Activated B cell treated with CpG ODN at 0.5 μM for 24 hours (primary cell): ENCODE measurements at regions of chr1 and their contacts with region 1.

Region 1: DNA sequence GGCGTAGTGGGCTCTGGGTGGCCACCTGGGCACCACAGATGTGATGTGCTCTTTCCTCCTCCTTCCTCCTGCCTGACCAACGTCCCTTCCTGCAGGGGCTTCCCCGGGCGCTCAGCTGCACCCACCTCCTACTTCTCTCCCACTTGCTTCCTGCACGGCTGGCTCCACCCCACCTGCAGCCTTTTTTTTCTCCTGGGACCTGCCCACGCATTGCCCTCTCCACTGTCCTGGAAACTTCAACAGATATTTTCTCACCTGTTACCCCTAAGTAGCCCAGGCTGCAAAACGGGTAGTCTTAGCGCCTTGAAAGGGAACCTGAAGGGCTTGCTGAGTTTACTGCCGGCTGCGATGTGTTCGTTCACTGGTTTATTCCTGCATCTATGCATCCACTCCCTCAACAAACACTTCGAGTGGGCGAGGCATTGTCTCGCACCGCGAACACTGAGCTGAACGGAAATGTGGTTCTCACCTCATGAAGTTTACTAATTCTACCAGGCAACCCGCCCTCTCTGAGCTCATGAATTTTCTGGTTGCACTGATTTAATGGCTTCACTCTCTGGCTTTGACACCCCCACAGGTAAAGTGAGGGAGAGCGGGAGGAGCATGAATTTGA is 23.6 kb downstream of the ZBTB18 start:
- DNase-seq: peak; percentile 34
- ATAC-seq: peak; percentile 69
- H3K4me3 Mint-ChIP-seq: peak overlapping the region; percentile 83
- H3K27ac Mint-ChIP-seq: peak overlapping the region; percentile 88
- H3K4me1 Mint-ChIP-seq: peaks cover 50% of the 10 kb centered on the region
- H3K27me3 Mint-ChIP-seq: no peaks in the 10 kb centered on the region
- CTCF ChIP-seq: no peak

Region 2: DNA sequence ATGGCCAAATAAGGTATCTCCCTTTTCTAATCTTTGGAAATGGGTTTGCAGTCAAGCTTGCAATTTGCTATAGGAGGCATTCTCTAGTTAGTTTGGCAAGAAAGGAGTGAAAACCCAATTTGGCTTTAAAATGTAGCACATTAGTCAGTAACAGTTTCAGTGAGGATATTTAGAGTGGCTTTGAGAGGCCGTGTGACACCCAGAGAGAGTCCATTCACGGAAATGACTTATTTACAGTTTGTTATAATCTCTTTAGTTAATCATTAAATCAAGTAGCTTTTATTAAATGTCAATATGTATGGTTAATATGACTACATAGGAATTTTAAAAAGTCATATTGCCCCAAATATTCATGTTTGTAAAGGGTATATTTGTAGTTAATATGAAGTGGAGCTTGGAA is 14.0 kb before region 1 on chr1:
- CTCF ChIA-PET with region 1: no interaction called
- POLR2A ChIA-PET with region 1: interaction called, 4 read pairs
- intact Hi-C with region 1: loop called (anchors 1 kb)
- DNase-seq: no peak
- ATAC-seq: no peak
- H3K4me3 Mint-ChIP-seq: no peak overlapping the region
- H3K27ac Mint-ChIP-seq: no peak overlapping the region
- H3K4me1 Mint-ChIP-seq: peaks cover 17% of the 10 kb centered on the region
- H3K27me3 Mint-ChIP-seq: no peaks in the 10 kb centered on the region
- CTCF ChIP-seq: no peak

Region 3: DNA sequence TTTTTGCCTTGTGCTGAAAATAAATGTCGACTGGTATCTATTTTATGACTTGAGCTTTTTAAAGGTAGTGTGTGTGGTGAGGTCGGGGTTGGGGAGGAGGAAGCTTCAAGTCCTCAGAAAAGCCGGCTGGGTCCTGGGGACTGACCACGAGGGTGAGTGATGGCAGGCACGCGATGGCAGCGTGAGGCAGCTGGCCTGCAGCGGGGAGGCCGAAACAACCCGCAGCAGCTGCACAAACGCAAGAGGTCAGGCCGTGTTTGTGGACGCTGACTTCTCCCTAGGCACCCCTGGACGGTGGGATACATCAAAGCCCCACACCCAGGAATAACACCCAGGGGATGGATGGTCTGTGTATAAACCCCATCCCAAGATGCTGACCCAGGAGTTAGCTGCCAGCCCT is 27.8 kb after region 1 on chr1:
- CTCF ChIA-PET with region 1: no interaction called
- POLR2A ChIA-PET with region 1: interaction called, 13 read pairs
- intact Hi-C with region 1: no loop called
- DNase-seq: no peak
- ATAC-seq: no peak
- H3K4me3 Mint-ChIP-seq: no peak overlapping the region
- H3K27ac Mint-ChIP-seq: no peak overlapping the region
- H3K4me1 Mint-ChIP-seq: peaks cover 13% of the 10 kb centered on the region
- H3K27me3 Mint-ChIP-seq: peaks cover 37% of the 10 kb centered on the region
- CTCF ChIP-seq: no peak

Region 4: DNA sequence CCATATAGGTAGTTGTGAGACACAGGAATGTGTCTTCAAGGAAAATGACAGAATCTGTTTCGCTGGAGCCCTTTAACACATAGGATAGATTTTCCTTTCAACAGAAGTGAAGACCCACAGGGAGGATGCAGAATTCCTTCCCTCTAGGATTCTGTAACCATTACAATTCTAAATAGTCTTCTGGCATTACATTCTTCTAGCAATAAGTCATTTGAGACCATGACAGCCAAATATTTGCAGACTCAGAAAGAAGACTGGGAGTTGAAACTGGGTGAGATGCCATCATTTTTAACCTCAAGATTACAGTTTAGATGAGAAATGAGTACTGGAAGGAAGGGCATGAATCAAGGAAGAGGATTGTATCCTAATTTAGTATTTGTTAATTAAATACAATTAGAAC is 38.0 kb after region 1 on chr1:
- CTCF ChIA-PET with region 1: no interaction called
- POLR2A ChIA-PET with region 1: no interaction called
- intact Hi-C with region 1: no loop called
- DNase-seq: no peak
- ATAC-seq: no peak
- H3K4me3 Mint-ChIP-seq: no peak overlapping the region
- H3K27ac Mint-ChIP-seq: no peak overlapping the region
- H3K4me1 Mint-ChIP-seq: peaks cover 10% of the 10 kb centered on the region
- H3K27me3 Mint-ChIP-seq: peaks cover 13% of the 10 kb centered on the region
- CTCF ChIP-seq: no peak